ENCODE measurements at regions of chr3 and their contacts with region 1.

Region 1: DNA sequence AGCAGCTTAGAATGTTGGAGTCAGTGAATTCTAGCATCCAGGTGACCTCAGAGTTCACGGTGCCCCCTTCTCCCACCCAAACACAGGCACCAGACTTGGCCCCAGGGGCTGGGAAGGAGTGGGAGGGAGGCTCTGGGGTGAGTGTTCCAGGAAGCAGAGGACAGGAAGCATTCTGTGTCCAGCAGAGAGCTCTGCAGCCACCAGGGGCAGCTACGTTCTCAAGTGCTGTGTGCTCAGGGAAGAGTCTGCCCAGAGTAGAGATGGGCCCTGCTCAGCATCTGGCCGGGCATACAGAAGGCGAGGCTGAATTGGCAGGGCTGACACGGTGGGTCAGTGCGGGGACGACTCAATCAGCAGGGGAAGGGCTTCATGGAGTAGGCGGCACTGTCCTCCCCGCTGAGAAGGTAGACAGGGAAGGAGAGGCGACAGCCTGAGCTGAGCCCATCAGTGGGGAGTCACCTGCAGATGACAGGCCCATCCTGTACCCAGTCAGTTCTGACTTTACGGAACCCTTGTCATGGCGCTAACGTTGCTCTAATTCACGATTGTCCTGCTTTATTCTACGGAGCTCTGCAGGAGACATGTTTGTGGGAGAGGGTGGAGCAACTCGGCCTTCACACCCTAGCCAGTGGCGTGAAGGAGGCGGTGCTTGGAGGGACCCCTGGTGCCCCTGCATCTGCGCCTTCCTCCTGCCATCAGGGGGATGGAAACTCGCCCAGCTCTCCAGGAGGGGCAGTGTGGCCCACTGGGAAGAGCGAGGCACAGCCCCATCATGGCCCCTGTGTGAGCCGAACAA is 82.2 kb downstream of the C3orf70 start:
- DNase-seq: peak; percentile 73
- ATAC-seq: peak; percentile 97
- H3K4me3 ChIP-seq: peak overlapping the region; percentile 8 to 42 (median 11); a peak in 3 of 6 replicates
- H3K27ac ChIP-seq: no peak overlapping the region
- H3K4me1 ChIP-seq: peaks cover 26% of the 10 kb centered on the region
- H3K27me3 ChIP-seq: peaks cover 0 to 1% of the 10 kb centered on the region in 2 experiments; a peak in 2 of 5 replicates
- CTCF ChIP-seq: peak; percentile 79
- EP300 ChIP-seq: no peak
- POLR2A ChIP-seq: no peak
- RAD21 ChIP-seq: peak; percentile 64

Region 2: GRCh38 chr3:185103359-185104127 is 32.9 kb after region 1 on chr3:
- CTCF ChIA-PET with region 1: no interaction called
- POLR2A ChIA-PET with region 1: no interaction called
- in situ Hi-C with region 1: no loop called
- intact Hi-C with region 1: loop called (anchors 2 kb)
- DNase-seq: peak; percentile 97
- ATAC-seq: peak; percentile 97
- H3K4me3 ChIP-seq: no peak overlapping the region
- H3K27ac ChIP-seq: peak overlapping the region; percentile 58
- H3K4me1 ChIP-seq: peaks cover 20% of the 10 kb centered on the region
- H3K27me3 ChIP-seq: no peaks in the 10 kb centered on the region
- CTCF ChIP-seq: no peak
- EP300 ChIP-seq: peak in 1 of 2 experiments; percentile 82; a peak in 2 of 4 replicates
- POLR2A ChIP-seq: no peak
- RAD21 ChIP-seq: no peak

Region 3: GRCh38 chr3:185176750-185177359 is 106.2 kb after region 1 on chr3:
- CTCF ChIA-PET with region 1: interaction called, 38 read pairs
- POLR2A ChIA-PET with region 1: interaction called, 9 read pairs
- in situ Hi-C with region 1: loop called (anchors 5 kb)
- intact Hi-C with region 1: loop called (anchors 1 kb)
- DNase-seq: peak; percentile 36
- ATAC-seq: no peak
- H3K4me3 ChIP-seq: peak overlapping the region in 2 of 3 experiments; percentile 22 to 52; a peak in 3 of 6 replicates
- H3K27ac ChIP-seq: no peak overlapping the region
- H3K4me1 ChIP-seq: peaks cover 24% of the 10 kb centered on the region
- H3K27me3 ChIP-seq: peaks cover 0 to 2% of the 10 kb centered on the region in 2 experiments; a peak in 1 of 5 replicates
- CTCF ChIP-seq: peak; percentile 66
- EP300 ChIP-seq: no peak
- POLR2A ChIP-seq: no peak
- RAD21 ChIP-seq: peak; percentile 58

Measured in HepG2 (cell line).